ENCODE measurements at regions of chr22 and their contacts with region 1.

Region 1: DNA sequence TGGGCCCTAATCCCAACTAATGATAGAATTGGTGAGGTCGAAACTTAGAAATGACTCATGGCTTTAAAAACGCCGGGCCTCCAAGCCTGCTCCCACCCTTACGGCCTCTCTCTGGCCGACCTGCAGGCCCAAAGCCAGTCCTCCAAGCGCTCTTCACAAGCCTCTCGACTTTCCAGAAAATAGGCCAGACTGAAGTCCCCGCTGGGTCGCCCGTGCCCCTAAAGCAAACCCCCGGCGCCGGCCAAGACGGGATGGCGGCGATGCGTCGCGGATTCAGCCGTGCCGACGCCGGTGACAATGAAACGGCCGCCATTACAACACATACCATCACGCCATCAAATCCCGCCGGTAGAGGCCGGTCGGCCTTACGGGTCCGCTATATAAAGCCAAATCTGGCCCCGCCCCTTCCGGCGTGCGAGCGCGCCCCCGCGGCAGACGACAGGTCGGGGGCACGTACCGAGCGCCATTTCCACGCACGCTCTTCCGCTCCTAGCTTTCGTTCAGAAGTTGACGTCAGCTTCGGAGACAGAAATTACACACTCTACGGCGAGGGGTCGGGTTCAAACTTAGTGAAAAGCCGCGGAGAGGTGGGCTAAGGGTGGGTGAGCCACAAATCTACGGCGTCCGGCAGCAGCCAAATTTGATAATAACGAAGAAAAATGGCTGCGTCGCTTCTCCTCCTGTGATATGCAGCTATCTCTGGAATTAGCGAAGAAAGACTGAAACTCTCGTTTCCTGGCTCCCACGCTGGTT is at the start of gene RPL3:
- DNase-seq: peak; percentile 96
- H3K4me3 Mint-ChIP-seq: peak within 1 kb of the TSS; percentile 99
- H3K27ac Mint-ChIP-seq: peak within 1 kb of the TSS; percentile 99
- H3K4me1 Mint-ChIP-seq: peaks cover 42% of the 10 kb centered on the region
- H3K27me3 Mint-ChIP-seq: no peaks in the 10 kb centered on the region
- total RNA-seq, gene RPL3: 1,905 and 1,941 TPM in 2 replicates

Region 2: DNA sequence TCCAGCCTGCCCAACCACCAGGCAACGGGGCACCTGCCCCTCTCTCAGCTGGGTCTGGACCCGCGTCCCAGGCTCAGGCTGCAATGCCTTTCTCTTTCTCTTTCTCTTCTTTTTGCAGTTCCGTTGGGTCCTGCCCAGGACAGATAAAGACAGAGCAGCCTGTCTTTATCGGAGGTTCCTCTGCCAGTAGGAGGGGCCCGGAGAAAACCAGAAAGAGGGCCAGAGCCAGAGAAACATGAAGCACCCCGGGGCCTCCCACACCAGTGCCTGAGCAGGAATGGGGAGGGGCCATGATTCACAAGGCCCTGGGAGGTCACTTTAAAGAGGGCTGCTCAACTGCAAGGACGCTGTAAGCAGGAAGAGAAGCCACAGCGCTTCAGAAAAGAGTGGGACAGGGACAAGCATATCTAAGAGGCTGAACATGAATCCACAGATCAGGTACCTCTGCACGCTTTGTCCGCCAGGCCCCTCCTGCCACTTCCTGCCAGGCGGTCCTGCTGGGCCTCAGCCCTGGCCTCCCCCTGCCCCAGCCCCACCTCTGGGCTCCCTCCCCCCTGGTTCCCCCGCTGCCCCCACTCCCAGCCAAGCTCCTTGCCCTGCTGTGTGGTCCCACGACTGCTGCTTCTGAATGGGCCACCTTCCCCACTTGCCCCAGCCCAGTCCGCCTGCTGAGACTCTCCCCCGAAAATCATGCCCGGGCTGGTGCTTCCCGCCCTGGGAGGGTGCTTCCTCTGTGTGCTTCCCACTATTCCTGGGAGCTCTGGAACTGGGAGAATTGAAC is 305.3 kb before region 1 on chr22 and contains the start of gene APOBEC3C:
- intact Hi-C with region 1: no loop called
- DNase-seq: peak; percentile 80
- H3K4me3 Mint-ChIP-seq: peak within 1 kb of the TSS; percentile 98
- H3K27ac Mint-ChIP-seq: peak within 1 kb of the TSS; percentile 91
- H3K4me1 Mint-ChIP-seq: peaks cover 25% of the 10 kb centered on the region
- H3K27me3 Mint-ChIP-seq: peaks cover 4% of the 10 kb centered on the region
- total RNA-seq, gene APOBEC3C: 71.5 and 73.2 TPM in 2 replicates

Region 3: DNA sequence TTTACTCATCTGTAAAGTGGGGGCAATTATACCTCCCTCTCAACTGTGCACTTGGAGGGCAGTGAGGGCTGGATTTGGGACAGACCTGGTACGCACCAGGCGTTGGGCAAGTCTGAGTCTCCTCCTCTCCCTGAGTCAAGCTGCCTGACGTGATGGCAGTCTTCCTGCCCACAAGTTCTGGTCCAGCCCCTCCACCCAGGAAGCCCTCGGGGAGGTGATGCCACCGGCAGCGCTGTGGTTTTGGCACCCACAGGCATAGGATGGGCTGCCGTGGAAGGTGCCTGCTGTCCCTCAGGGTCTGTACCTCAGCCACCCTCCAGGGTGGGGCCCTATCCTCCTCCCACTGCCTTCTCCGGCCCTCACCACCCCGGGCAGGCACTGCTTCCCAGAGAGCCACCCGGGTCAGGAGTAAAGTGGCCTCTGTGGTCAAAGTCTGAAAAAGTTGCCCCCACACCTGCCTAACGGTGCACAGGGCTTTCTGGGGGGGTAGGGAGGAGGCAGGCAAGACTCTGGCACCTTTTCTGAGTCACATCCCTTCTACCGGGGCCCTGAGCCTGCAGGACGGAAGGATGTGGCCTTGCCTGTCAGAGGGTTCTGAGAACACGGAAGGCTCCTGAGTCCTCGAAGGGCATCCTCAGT is 228.9 kb before region 1 on chr22:
- intact Hi-C with region 1: loop called (anchors 2 kb)
- DNase-seq: peak; percentile 81
- H3K4me3 Mint-ChIP-seq: peak overlapping the region; percentile 75
- H3K27ac Mint-ChIP-seq: peak overlapping the region; percentile 94
- H3K4me1 Mint-ChIP-seq: peaks cover 80% of the 10 kb centered on the region
- H3K27me3 Mint-ChIP-seq: no peaks in the 10 kb centered on the region

Region 4: GRCh38 chr22:39170825-39171622 is 148.4 kb before region 1 on chr22:
- intact Hi-C with region 1: loop called (anchors 1 kb)
- DNase-seq: peak; percentile 79
- H3K4me3 Mint-ChIP-seq: peak overlapping the region; percentile 75
- H3K27ac Mint-ChIP-seq: peak overlapping the region; percentile 63
- H3K4me1 Mint-ChIP-seq: peaks cover 40% of the 10 kb centered on the region
- H3K27me3 Mint-ChIP-seq: peaks cover 5% of the 10 kb centered on the region

Region 5: DNA sequence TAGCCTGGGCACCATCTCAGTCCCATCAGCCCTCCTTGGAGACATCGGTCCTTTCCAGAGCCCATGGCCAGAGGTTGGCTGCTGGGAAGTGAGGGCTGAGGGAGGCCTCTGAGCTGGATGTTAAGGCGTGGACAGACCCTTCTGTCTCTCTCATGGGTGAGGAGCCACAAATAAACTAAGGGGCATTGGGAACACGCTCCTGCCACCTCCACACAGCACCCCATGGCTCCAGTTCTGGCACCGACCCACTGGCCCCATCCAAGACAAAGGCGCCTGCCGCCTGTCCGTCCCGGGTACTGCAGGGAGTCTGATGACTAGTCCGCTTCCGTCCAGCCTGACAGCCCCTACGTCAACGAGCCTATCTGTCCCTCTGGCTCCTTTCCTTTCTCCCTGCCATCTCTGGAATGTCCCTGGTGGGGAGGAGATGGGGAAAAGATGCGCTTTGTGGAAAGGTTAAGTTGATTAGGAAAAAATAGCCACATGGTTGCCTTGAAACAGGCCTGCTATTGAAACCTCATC is 85.1 kb before region 1 on chr22:
- intact Hi-C with region 1: no loop called
- DNase-seq: no peak
- H3K4me3 Mint-ChIP-seq: no peak overlapping the region
- H3K27ac Mint-ChIP-seq: no peak overlapping the region
- H3K4me1 Mint-ChIP-seq: peaks cover 23% of the 10 kb centered on the region
- H3K27me3 Mint-ChIP-seq: peaks cover 59% of the 10 kb centered on the region

Region 6: DNA sequence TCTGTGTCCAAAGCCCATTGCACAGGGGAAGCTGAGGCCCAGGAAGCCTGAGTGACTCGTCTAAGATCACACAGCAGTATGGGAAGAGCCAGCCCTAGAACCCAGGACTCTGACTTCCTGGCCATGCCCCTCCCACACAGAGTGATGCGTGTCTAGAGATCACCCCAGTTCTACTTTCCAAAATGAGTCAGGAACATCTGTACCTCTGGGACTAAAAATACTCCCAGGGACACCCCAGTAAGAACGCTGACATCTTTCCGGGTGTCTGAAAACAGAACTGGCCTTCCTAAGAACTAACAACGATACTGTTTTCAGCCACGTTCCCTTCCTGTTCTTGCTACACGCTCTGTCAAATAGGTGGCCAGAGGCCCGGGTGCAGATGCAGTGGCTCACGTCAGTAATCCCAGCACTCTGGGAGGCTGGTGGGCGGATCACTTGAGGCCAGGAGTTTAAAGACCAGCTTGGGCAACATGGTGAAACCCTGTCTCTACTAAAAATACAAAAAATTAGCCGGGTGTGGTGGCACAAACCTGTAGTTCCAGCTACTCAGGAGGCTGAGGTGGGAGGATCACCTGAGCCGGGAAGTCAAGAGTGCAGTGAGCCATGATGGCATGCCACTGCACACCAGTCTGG is 52.9 kb before region 1 on chr22:
- intact Hi-C with region 1: loop called (anchors 1 kb)
- DNase-seq: peak; percentile 28
- H3K4me3 Mint-ChIP-seq: no peak overlapping the region
- H3K27ac Mint-ChIP-seq: peak overlapping the region; percentile 89
- H3K4me1 Mint-ChIP-seq: peaks cover 28% of the 10 kb centered on the region
- H3K27me3 Mint-ChIP-seq: peaks cover 2% of the 10 kb centered on the region

Measured in activated T-helper 1 cell treated with anti-CD3 and anti-CD28 coated beads, Interleukin-12 subunit alpha, Interleukin-12 subunit beta, Interleukin-2, Interleukin-4 antibody, amounts not matched to agents 30 ng/mL and 10 ng/mL and 1 ng/mL, durations not matched to agents 14 hours and 24 hours and 36 hours (primary cell).